ENCODE measurements at regions of chr15 and their contacts with region 1.

Region 1: DNA sequence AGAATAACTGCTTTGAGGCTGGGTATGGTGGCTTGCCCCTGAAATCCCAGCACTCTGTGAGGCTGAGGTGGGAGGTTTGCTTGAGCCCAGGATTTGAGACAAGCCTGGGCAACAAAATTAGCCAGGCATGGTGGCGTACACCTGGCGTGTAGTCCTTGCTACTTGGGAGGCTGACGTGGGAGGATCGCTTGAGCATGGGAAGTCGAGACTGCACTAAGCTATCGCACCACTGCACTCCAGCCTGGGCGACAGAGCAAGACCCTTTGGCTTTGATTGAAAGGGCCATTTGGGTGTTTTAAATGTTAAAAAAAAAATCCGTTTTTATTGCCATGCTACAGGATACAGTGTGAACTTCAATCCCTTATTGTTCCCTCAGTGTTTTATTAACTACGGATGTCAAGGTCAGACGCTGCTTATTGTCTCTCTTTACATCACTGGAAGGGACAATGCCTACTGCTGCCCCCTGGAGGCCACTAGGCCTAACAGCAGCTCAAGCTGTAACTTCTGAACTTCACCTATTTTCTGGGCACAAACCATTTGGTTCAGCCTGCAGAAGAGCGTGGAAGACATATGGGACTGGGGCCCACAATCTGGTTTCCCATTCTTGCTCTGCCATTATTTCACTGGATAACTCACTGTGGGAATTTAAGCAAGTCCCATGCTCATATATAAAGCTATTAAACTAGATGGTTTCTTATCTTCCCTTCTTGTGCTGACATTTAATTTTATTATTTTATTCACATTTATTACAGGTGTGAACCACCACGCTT is 15.3 kb upstream of the IREB2 start:
- DNase-seq: peak; percentile 75
- CTCF ChIP-seq: peak; percentile 92

Region 2: DNA sequence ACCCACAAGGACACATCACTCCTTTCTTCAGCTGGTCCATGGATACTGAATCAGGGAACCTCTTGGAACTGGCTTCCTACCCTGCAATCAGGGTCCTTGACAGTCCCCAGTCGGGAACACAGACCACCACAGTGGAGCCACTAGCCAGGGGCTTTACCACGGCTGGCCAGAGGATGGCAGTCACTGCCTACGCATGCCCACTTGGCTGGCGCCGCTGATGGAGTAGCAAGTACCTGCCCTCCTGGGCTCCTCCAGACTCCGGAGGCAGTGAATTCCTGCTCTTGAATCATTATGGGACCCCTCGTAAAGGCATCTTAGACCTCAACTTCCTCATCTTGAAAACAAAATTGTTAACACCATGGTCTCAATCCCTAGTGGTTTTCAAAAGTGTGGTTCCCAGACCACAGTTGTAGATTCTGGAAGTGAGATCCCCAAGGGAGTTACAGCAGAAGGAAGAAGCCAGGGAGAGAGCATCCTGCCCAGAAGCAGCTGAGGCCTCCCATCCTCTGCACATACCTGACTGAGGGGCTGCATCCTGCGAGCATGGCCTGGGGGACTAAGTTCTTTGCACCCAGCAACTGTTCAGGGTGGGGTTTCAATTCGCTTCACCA is 114.2 kb before region 1 on chr15:
- CTCF ChIA-PET with region 1: interaction called, 26 read pairs
- POLR2A ChIA-PET with region 1: no interaction called
- DNase-seq: peak; percentile 76
- CTCF ChIP-seq: peak; percentile 71

Region 3: DNA sequence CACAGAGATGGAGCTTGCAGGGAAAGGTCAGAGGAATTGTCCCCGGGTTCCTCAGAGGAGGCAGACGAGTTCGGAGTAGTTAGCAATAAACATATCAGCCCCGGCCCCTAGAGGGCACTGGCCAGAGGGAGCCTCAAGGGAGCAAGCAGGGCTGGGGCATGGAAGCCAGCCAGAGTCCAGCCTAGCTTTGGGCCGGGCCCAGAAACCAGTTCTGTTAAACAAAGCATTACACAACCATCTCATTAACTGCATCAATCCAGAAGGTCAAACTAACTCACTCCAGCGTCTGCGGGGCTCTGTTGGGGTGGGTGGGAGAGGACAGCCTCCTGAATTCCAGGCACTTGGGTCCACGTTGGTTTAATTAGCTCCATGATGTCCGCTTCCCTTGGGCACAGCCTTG is 25.8 kb before region 1 on chr15:
- CTCF ChIA-PET with region 1: interaction called, 19 read pairs
- POLR2A ChIA-PET with region 1: no interaction called
- DNase-seq: no peak
- CTCF ChIP-seq: peak; percentile 8

Region 4: GRCh38 chr15:78437762-78438302 is 15.1 kb after region 1 on chr15 and contains the start of gene IREB2:
- CTCF ChIA-PET with region 1: interaction called, 43 read pairs
- POLR2A ChIA-PET with region 1: interaction called, 3 read pairs
- DNase-seq: peak; percentile 99
- CTCF ChIP-seq: no peak

Region 5: DNA sequence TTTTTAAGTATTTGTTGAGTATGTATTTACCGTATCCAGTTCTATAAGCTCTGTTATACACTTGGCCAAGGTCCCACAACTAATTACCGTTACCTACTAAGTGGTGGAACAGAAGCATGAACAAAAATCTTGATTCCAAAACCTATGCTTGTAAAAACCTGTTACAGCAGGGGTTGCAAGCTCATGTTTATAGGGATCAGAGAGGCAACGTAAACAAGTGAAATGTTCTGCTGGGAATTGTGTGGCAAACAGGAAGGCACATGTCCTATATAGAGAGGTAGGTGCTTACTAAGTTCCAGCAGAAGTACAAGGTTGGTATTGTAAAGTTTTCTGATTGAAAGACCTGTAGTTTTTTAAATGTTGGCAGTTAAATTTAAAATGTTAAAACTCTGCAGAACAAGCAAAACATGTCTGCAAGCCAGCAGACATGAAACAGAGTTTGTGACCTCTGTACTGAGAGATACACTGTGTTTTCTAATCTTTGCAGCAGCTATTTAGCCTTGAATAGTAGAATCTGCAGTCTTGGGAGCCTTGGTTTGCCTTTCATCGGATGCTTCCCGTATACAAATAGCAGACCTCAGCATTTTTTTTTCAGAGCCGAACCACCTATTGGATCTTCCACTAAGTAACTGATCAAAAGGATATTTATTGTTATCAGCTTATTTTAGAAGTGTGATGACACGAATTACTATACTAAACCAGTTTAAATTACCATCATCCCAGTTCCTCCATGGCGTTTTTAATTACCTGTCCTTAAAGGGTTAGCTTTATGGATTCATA is 26.7 kb after region 1 on chr15:
- CTCF ChIA-PET with region 1: interaction called, 10 read pairs
- POLR2A ChIA-PET with region 1: no interaction called
- DNase-seq: no peak
- CTCF ChIP-seq: no peak

Measured in GM10248 (cell line).